ENCODE measurements at regions of chr19 and their contacts with region 1.

Region 1: DNA sequence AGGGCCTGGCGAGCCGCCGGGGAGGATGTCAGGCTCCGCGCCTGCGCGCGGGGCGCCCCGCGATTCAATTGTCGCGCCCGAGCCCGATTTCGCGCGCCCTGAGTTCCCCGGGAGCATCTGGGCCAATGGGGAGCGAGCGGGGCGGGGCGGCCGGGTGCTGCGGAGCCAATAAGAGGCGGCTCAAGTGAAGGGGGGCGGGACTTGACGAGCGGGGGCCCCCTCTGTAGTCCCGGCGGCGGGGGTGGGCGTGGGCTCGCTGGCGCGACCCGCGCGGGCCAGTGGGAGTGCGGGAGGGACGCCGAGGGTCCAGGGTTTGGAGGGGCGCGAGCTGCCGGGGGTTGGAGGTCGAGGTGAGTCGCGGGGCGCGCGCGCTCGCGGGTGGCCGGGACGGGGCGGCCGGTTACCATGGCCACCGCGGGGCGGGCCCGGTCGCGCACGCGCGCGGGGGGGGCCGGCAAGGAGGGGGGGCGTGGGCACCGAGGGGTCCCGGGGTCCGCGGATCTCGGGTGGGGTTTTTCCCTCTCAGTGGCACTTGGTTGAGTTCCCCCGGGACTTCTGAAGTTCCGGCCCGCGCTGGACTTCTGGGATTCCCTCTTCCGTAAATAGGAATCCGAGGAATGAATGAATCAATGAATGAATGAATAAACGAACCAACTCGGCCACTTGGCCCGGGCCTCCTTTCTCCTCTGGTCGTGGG is 744 bp downstream of the UHRF1 start:
- DNase-seq: no peak
- H3K4me3 ChIP-seq: peak overlapping the region; percentile 70
- CTCF ChIP-seq: no peak

Region 2: DNA sequence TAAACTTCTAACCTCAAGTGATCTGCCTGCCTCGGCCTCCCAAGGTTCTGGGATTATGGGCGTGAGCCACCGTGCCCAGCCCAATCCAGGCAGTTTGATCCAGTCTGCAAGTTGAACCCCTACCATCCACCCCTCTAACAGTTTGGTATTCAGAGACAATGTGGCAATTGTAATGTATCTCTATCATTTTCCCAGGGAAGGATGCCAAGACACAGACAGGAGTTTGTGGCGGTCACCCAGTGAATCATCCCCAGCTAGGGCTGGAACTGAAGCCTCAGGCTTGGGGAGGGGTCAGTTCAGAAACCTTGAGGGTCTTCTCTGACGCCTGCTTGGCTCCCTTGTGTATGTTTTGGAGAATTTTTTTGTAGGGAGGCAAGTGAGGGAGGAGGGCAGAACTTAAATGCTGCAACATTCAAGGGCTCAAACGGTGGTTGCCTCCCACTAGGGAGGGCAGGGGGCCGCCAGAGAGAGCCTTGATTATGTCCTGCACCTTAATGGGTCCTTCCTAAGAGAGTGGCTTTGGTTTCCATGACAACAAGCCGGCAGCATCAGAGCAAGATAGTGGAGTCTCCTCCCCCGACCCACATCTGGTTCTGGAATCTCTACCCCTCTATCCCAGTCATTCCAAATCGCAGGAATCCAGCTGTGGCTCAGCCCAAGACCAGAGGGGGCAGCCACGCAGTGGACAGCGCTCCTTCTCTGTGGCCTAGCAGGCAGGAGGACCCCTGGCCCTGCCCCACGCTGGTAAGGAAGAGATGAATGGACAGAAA is 133.4 kb before region 1 on chr19:
- CTCF ChIA-PET with region 1: no interaction called
- POLR2A ChIA-PET with region 1: no interaction called
- DNase-seq: no peak
- H3K4me3 ChIP-seq: no peak overlapping the region
- CTCF ChIP-seq: no peak

Region 3: GRCh38 chr19:4823577-4823976 is 86.5 kb before region 1 on chr19:
- CTCF ChIA-PET with region 1: interaction called, 7 read pairs
- POLR2A ChIA-PET with region 1: interaction called, 11 read pairs
- DNase-seq: no peak
- H3K4me3 ChIP-seq: no peak overlapping the region
- CTCF ChIP-seq: no peak

Region 4: GRCh38 chr19:4851551-4852290 is 58.3 kb before region 1 on chr19:
- CTCF ChIA-PET with region 1: interaction called, 16 read pairs
- POLR2A ChIA-PET with region 1: interaction called, 6 read pairs
- DNase-seq: no peak
- H3K4me3 ChIP-seq: no peak overlapping the region
- CTCF ChIP-seq: peak; percentile 89

Region 5: DNA sequence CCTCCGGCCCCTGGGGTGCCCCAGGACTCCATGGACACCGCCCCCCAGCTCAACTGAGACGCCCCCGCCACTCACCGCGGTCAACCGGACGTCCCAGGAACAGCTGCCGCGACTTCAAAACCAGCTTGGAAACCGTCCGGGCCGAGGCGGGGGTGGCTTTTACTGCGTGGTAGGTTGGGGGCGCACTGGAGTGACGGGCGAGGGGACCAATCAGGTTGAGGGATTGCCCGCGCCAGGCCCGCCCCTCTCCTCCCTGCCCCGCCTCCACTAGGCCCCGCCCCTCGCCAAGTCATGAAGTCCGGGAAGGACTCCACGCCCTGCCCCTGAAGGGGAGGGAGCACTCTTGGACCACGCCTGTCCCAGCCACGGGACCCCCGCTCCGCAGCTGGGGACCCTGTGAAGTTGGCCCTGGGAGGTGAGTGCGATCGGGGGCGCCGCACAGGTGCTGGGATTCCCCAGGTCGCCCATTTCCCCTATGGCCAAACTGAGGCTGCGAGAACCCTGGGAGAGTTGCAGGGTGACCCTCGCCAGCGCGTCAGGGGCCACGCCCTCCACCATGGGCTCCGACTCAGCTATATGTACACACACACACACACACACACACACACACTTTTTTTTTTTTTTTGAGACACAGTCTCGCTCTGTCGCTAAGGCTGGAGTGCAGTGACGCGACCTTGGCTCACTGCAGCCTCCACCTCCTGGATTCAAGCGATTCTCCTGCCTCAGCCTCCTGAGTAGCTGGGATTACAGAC is 42.3 kb before region 1 on chr19 and contains the start of gene PLIN3:
- CTCF ChIA-PET with region 1: interaction called, 129 read pairs
- POLR2A ChIA-PET with region 1: interaction called, 23 read pairs
- DNase-seq: peak; percentile 59
- H3K4me3 ChIP-seq: peak within 1 kb of the TSS; percentile 88
- CTCF ChIP-seq: no peak

Region 6: DNA sequence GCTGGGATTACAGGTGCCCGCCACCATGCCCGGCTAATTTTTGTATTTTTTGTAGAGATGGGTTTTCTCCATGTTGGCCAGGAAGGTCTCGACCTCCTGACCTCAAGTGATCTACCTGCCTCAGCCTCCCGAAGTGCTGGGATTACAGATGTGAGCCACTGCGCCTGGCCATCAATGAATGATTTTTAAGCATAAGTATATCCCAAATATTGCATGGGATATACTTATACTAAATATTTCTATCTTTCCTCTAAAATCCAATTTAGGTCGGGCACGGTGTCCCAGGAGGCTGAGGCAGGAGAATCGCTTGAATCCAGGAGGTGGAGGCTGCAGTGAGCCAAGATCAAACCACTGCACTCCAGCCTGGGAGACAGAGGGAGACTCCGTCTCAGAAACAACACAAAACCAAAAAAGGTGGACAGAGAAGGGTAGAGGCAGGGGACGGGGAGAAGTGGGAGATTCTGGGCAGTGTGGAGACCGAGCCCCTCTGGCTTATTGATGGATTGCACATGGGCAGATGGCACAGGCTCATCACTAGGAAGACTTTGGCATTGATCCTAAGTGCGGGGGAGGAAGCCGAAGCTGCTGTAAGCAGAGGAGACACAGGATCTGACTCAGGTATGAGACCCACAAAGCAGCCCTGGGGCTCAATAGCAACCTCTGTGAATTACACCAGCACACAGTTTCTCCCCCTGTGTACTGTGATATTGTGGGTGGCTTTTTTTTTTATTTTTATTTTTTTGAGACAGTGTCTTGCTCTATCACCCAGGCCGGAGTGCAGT is 20.8 kb before region 1 on chr19:
- CTCF ChIA-PET with region 1: interaction called, 12 read pairs
- POLR2A ChIA-PET with region 1: no interaction called
- DNase-seq: no peak
- H3K4me3 ChIP-seq: no peak overlapping the region
- CTCF ChIP-seq: no peak

Region 7: DNA sequence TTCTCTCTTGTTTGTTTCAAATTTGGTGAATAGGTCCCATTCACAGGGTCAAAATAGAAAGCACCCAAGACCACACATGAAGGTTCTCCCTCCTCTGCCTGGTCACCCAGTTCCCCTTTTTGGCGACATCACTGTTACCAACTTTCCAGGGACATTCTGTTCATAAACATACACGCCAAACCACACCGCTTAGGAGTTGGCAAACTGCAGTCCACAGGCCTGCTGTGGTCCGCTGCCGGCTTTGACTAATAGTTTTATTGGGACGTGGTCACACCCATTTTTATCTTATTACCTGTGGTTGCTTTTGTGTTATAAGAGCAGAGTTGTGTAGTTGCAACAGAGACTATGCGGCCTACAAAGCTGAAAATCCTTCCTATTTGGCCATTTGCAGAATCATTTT is 23.5 kb after region 1 on chr19:
- CTCF ChIA-PET with region 1: interaction called, 17 read pairs
- POLR2A ChIA-PET with region 1: interaction called, 3 read pairs
- DNase-seq: no peak
- H3K4me3 ChIP-seq: no peak overlapping the region
- CTCF ChIP-seq: no peak

Measured in AG04449 (cell line).